Activated CD8-positive, alpha-beta T cell treated with anti-CD3 and anti-CD28 coated beads, Interleukin-2, amount 10 ng/mL, durations not matched to agents 7 days and 5 days (primary cell): ENCODE measurements at regions of chr15 and their contacts with region 1.

Region 1: GRCh38 chr15:41465822-41466421 is 27.8 kb upstream of the ITPKA start:
- DNase-seq: peak; percentile 46
- ATAC-seq: peak; percentile 53
- H3K4me3 Mint-ChIP-seq: no peak overlapping the region
- H3K27ac Mint-ChIP-seq: no peak overlapping the region
- H3K4me1 Mint-ChIP-seq: peaks cover 5% of the 10 kb centered on the region
- H3K27me3 Mint-ChIP-seq: no peaks in the 10 kb centered on the region

Region 2: GRCh38 chr15:41416742-41417406 is 49.0 kb before region 1 on chr15 and contains the start of gene RTF1:
- CTCF ChIA-PET with region 1: no interaction called
- POLR2A ChIA-PET with region 1: no interaction called
- DNase-seq: peak; percentile 96
- ATAC-seq: peak; percentile 96
- H3K4me3 Mint-ChIP-seq: peak within 1 kb of the TSS; percentile 94
- H3K27ac Mint-ChIP-seq: peak within 1 kb of the TSS; percentile 93
- H3K4me1 Mint-ChIP-seq: peaks cover 33% of the 10 kb centered on the region
- H3K27me3 Mint-ChIP-seq: no peaks in the 10 kb centered on the region
- total RNA-seq, gene RTF1: 31.0 to 40.7 TPM

Region 3: DNA sequence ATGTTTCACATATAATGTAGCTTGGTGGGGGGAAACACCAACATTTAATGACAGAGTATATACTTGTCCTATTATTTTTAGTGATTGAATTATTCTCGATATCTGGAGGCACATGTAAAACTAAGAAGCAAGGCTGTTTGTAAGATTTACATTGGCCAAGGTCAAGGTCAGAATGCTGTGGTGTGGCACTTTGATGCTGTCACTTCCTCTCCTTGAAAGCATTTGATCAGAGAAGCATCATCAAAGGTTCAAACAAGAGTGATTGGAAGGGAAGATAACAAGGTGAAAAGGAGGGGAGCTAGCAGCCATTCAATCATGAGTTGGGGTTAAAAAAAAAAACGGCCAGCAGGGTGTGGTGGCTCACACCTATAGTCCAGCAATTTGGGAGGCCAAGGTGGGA is 22.6 kb before region 1 on chr15:
- CTCF ChIA-PET with region 1: interaction called, 16 read pairs
- POLR2A ChIA-PET with region 1: interaction called, 3 read pairs
- DNase-seq: peak; percentile 51
- ATAC-seq: peak; percentile 86
- H3K4me3 Mint-ChIP-seq: no peak overlapping the region
- H3K27ac Mint-ChIP-seq: peak overlapping the region; percentile 74
- H3K4me1 Mint-ChIP-seq: peaks cover 19% of the 10 kb centered on the region
- H3K27me3 Mint-ChIP-seq: no peaks in the 10 kb centered on the region

Region 4: GRCh38 chr15:41483115-41483514 is 17.2 kb after region 1 on chr15:
- CTCF ChIA-PET with region 1: interaction called, 47 read pairs
- POLR2A ChIA-PET with region 1: no interaction called
- DNase-seq: peak; percentile 58
- ATAC-seq: peak; percentile 59
- H3K4me3 Mint-ChIP-seq: peak overlapping the region; percentile 56
- H3K27ac Mint-ChIP-seq: peak overlapping the region; percentile 46
- H3K4me1 Mint-ChIP-seq: peaks cover 25% of the 10 kb centered on the region
- H3K27me3 Mint-ChIP-seq: peaks cover 4% of the 10 kb centered on the region

Region 5: GRCh38 chr15:41506796-41507341 is 40.9 kb after region 1 on chr15:
- CTCF ChIA-PET with region 1: interaction called, 25 read pairs
- POLR2A ChIA-PET with region 1: no interaction called
- DNase-seq: no peak
- ATAC-seq: no peak
- H3K4me3 Mint-ChIP-seq: no peak overlapping the region
- H3K27ac Mint-ChIP-seq: no peak overlapping the region
- H3K4me1 Mint-ChIP-seq: peaks cover 18% of the 10 kb centered on the region
- H3K27me3 Mint-ChIP-seq: peaks cover 48% of the 10 kb centered on the region

Region 6: DNA sequence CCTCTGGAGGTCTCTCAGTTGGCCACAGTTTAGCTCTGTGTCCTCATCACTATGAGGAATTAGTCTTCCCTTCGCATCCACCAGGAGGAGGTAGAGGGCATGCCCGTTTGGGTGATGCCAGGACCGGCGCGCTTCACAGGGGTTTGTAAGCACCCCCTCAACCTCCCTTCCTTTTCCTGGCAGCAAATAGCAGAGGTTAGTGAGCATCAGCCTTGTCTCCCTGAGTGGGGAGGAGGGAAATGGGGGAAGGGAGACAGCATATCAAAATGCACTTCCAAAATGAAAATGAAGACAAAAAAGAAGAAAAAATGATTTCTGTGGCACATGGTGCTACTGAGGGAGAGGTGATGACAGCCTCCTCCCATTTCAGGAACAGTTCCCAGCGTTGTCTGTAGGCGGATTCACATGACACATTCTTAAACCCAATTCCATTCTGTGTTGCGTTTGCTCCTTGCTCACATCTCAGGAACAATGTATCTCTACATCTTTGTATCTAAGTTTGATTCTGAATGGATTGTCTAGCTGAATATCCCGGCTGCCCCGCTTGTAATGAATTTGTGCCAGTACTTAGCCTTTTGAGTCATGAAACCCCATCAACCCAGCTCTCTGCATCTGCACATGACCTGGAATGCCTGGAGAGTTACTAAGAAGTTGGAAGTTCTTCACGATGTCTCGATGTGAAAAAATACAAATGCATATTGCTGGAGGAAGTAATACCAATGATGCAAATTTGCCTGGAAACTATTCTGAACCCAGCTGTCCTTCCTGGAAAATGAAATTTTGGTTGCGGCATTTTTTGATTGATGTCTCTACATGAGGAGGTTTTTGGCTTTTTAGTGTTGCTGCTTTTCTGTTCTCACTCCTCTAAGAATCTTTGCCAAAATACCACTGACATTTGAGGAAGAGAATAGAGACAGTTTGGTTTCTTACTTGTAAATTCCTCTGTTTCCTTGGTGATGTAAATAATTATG is 138.3 kb after region 1 on chr15:
- CTCF ChIA-PET with region 1: interaction called, 15 read pairs
- POLR2A ChIA-PET with region 1: no interaction called
- DNase-seq: peak; percentile 66
- ATAC-seq: peak; percentile 88
- H3K4me3 Mint-ChIP-seq: peak overlapping the region; percentile 32
- H3K27ac Mint-ChIP-seq: no peak overlapping the region
- H3K4me1 Mint-ChIP-seq: peaks cover 9% of the 10 kb centered on the region
- H3K27me3 Mint-ChIP-seq: peaks cover 25% of the 10 kb centered on the region

Region 7: GRCh38 chr15:41904541-41905005 is 438.7 kb after region 1 on chr15:
- CTCF ChIA-PET with region 1: interaction called, 13 read pairs
- POLR2A ChIA-PET with region 1: no interaction called
- DNase-seq: peak; percentile 81
- ATAC-seq: peak; percentile 81
- H3K4me3 Mint-ChIP-seq: no peak overlapping the region
- H3K27ac Mint-ChIP-seq: peak overlapping the region; percentile 26
- H3K4me1 Mint-ChIP-seq: peaks cover 22% of the 10 kb centered on the region
- H3K27me3 Mint-ChIP-seq: no peaks in the 10 kb centered on the region